SK-N-SH (cell line): ENCODE measurements at regions of chr11 and their contacts with region 1.

Region 1: DNA sequence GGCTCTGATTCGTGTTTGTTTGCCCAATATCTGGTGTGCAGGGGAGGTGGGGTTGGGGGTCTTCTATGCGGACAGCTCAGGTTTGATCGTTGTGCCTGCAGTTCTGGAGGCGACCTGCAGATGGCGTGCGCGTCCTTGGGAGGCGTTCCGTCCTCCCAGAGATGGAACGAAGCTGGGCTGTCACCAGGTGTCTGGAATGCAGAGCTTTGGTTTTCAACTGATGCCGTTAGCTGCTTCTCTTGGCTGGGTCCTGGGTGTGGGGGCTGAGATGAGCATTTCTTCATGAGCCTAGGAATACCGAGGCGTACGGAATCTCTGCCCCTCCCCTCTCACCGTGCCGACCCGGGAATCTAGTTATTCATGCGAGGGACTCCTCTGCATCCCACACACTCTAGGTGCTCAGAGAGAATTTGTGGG is 98.6 kb downstream of the CEP164 start:
- DNase-seq: peak; percentile 91
- H3K4me3 ChIP-seq: peak overlapping the region in 1 of 2 experiments; percentile 31; a peak in 1 of 4 replicates
- H3K27ac ChIP-seq: no peak overlapping the region
- H3K4me1 ChIP-seq: peaks cover 0 to 10% of the 10 kb centered on the region in 2 experiments; a peak in 1 of 4 replicates
- H3K27me3 ChIP-seq: no peaks in the 10 kb centered on the region
- CTCF ChIP-seq: peak; percentile 95
- EP300 ChIP-seq: no peak
- RAD21 ChIP-seq: peak; percentile 95

Region 2: GRCh38 chr11:117273550-117274289 is 152.6 kb before region 1 on chr11:
- CTCF ChIA-PET with region 1: no interaction called
- POLR2A ChIA-PET with region 1: no interaction called
- DNase-seq: no peak
- H3K4me3 ChIP-seq: no peak overlapping the region
- H3K27ac ChIP-seq: peak overlapping the region in 1 of 2 experiments; percentile 80; a peak in 2 of 4 replicates
- H3K4me1 ChIP-seq: 0 out of 4 replicates have a peak, but pooled peaks cover 0 to 10% of the 10 kb centered on the region in 2 experiments
- H3K27me3 ChIP-seq: no peaks in the 10 kb centered on the region
- CTCF ChIP-seq: no peak
- EP300 ChIP-seq: peak in 1 of 2 experiments; percentile 57; a peak in 1 of 4 replicates
- RAD21 ChIP-seq: no peak

Region 3: DNA sequence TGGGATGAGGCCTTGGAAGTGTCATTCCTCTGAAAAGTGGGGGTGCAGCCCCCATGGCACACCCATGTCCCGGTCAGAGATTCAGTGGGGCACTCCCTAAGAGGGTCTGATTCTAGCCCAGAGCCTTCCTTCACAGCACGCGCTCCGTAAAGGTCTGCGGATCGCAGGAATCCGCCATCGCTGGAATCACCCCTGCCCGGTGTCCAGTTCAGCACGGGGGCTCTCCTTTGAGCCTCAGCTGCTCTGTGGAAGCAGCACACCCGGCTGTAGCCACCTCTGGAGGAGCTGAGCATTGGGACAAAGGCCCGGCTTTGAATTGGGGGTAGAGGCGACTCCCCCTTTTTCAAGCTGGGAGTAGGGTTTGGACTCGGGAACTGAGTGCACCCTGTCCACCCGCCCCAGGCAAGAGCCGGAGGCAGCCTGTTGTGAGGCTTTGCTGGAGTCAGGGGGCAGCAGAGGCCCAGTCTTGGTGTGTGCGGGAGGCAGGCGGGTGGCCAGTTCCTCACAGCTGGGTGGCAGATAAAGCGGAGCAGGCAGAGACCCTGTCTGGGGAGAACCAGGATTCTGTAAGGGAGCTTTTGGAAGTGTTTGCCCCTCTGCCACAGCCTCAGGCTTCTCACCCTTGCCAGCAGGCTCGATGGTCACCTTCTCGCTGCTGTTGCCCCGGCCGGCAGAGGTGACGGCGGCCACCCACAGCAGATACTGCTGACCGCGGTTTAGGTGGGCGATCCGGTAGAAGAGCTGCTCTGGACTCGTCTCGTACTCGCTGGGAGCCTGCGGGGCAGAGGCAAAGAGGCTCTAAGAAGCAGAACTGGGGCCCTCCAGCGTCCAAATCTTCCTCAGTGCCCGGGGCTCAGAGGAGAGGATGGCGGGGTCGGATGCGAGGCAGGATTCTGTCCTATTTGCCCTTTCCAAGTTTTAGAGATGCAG is 17.3 kb after region 1 on chr11:
- CTCF ChIA-PET with region 1: interaction called, 172 read pairs
- POLR2A ChIA-PET with region 1: interaction called, 3 read pairs
- DNase-seq: peak; percentile 92
- H3K4me3 ChIP-seq: peak overlapping the region; percentile 8 to 9; a peak in 2 of 4 replicates
- H3K27ac ChIP-seq: peak overlapping the region in 1 of 2 experiments; percentile 99; a peak in 2 of 4 replicates
- H3K4me1 ChIP-seq: peaks cover 0 to 29% of the 10 kb centered on the region in 2 experiments; a peak in 2 of 4 replicates
- H3K27me3 ChIP-seq: peaks cover 22% of the 10 kb centered on the region; the same call in 1 of the 2 replicates
- CTCF ChIP-seq: peak; percentile 65
- EP300 ChIP-seq: peak in 1 of 2 experiments; percentile 31; a peak in 1 of 4 replicates
- RAD21 ChIP-seq: peak; percentile 96

Region 4: DNA sequence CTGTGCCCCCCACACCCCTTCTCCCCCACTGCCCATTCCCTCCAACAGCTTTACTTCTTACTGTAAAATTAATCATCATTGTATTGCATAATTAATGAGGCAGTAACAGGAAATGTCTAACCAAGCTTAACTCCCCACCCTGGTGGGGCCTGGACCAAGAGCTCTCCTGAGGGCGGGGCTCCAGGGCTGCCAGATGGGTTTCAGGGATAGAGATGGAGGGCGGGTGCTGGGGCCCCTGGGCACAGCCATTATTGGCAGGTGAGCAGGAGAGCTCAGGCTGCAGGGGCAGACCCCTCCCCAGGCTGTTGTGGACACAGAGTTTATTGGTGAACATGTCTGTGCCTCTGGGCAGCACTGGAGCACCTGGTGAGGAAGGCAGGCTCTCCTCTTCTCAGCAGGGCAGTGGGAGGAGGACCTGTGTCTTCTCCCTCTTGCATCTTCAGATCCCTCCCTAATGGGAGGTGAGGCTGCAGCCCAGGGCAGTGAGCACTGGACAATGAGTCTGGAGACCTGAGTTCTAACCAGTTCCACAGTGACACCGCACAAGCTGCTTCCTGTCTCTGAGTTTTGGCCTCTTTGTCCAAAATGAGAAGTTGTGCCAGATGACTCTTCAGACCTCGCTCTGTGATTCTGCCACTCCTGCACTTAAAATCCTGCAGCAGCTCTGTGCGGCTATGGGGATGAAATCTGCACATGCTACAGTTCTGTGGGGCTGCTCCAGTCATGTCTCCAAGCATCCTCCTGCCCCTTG is 134.7 kb after region 1 on chr11:
- CTCF ChIA-PET with region 1: interaction called, 15 read pairs
- POLR2A ChIA-PET with region 1: no interaction called
- DNase-seq: no peak
- H3K4me3 ChIP-seq: no peak overlapping the region
- H3K27ac ChIP-seq: no peak overlapping the region
- H3K4me1 ChIP-seq: peaks cover 0 to 19% of the 10 kb centered on the region in 2 experiments; a peak in 2 of 4 replicates
- H3K27me3 ChIP-seq: peaks cover 8% of the 10 kb centered on the region; the same call in 1 of the 2 replicates
- CTCF ChIP-seq: no peak
- EP300 ChIP-seq: no peak
- RAD21 ChIP-seq: no peak

Region 5: DNA sequence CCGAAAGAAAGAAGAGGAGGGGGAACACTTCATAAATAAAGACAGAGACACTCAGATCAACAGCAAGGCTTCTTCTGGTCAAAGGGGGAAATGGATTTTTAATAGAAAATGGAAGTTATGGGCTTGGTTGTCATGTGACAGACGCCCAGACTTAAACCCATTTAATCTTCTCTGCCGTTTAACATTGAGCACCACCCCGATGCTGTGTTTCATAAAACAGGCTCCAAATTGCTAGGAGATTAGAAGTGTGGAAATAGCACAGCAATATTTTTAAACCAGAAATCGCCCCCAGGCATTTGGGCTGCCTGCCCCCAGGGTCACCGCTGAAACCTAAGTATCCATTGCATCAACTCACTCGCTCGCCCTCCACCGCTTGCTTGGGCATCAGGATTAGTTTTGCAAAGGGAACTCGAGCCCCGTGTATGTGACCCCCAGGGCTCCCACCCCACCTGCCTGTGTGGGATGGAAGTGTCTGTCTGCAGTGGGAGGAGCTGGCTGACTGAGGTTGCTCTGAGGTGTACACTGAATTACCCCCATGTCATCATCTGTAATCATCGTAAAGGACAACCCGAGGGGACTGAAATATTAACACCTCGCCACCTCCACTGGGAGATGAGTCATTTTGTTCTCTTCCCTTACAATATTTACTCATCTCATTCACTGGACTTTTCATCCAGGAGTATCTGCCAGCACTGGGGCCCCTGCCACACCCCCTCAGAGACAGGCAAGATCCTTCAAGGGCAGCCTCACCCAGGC is 360.0 kb after region 1 on chr11:
- CTCF ChIA-PET with region 1: interaction called, 18 read pairs
- POLR2A ChIA-PET with region 1: no interaction called
- DNase-seq: no peak
- H3K4me3 ChIP-seq: no peak overlapping the region
- H3K27ac ChIP-seq: no peak overlapping the region
- H3K4me1 ChIP-seq: peaks cover 0 to 11% of the 10 kb centered on the region in 2 experiments; a peak in 2 of 4 replicates
- H3K27me3 ChIP-seq: peaks cover 17% of the 10 kb centered on the region; the same call in 1 of the 2 replicates
- CTCF ChIP-seq: no peak
- EP300 ChIP-seq: no peak
- RAD21 ChIP-seq: no peak

Region 6: DNA sequence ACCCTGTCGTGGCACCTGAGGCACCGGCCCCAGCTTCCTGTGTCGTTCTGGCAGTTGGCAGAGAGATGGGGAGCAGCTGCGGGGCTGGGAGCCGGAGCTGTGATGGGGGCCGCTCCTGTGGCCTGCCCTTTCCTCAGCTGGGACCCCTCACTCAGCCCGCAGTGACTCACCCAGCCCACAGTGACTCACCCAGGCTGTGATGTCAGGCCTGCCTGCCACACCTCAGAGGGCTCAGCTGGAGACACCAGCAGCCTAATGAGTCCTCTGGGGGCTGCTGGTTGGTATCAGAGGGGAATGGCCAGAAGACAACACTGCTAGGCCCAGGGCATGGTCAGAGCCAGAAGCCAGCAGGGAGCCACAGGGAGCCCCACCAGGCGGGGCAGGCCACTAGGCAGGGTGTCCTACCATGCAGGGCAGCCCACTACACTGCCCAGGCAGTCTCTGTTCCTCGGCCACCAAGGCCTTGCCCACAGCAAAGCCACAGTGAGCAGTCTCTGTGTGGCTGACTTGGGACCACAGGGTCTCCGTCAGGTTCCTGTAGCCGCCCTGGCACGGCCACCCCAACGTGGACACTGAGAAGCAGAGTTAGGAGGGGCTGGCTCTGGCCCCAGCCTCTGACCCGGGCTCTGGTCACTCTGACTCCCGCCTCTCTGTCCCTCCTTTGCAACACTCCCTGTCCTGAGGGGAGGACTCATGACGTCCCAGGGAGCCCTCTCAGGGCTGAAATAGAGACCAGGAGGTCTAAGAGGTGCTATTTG is 402.5 kb after region 1 on chr11:
- CTCF ChIA-PET with region 1: interaction called, 431 read pairs
- POLR2A ChIA-PET with region 1: no interaction called
- DNase-seq: no peak
- H3K4me3 ChIP-seq: no peak overlapping the region
- H3K27ac ChIP-seq: no peak overlapping the region
- H3K4me1 ChIP-seq: peaks cover 0 to 6% of the 10 kb centered on the region in 2 experiments; a peak in 2 of 4 replicates
- H3K27me3 ChIP-seq: peaks cover 9% of the 10 kb centered on the region; the same call in 1 of the 2 replicates
- CTCF ChIP-seq: no peak
- EP300 ChIP-seq: no peak
- RAD21 ChIP-seq: no peak

Region 7: DNA sequence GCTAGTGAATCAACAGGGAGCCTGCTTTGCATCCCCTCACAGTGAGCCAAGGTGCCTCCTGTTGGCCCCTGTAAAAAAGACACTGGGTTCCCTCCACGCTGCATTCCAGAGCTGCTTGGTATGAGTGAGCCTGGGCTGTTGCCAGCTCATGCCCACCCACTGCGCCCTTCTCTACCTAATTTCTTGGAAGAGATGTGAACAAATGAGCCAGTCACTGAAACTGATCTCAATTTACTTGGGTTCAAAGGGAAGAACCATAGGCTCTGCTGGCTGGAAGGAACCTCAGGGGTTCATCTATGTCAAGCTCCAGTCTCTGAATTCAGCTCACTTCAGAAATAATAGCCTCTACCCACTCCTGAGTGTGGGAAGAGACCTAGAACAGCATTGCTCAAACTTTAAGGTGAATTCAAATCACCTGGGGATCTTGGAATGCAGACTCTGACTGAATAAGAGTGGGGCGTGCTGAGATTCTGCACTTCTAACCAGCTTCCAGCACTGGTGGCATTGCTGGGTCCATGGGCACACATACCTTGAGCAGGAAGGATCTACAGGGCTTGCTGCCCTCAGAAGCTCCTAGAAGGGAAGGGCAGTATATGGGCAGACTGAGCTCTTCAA is 645.2 kb after region 1 on chr11:
- CTCF ChIA-PET with region 1: interaction called, 10 read pairs
- POLR2A ChIA-PET with region 1: no interaction called
- DNase-seq: no peak
- H3K4me3 ChIP-seq: no peak overlapping the region
- H3K27ac ChIP-seq: no peak overlapping the region
- H3K4me1 ChIP-seq: no peaks in the 10 kb centered on the region
- H3K27me3 ChIP-seq: peaks cover 2% of the 10 kb centered on the region; the same call in 1 of the 2 replicates
- CTCF ChIP-seq: no peak
- EP300 ChIP-seq: no peak
- RAD21 ChIP-seq: no peak